AG04450 (cell line): ENCODE measurements at regions of chr7 and their contacts with region 1.

Region 1: GRCh38 chr7:154503962-154504550 is 451.9 kb downstream of the DPP6 start:
- DNase-seq: no peak
- H3K4me3 ChIP-seq: no peak overlapping the region
- H3K27ac ChIP-seq: no peak overlapping the region
- H3K27me3 ChIP-seq: no peaks in the 10 kb centered on the region
- CTCF ChIP-seq: peak; percentile 46; the same call in 1 of the 2 replicates

Region 2: GRCh38 chr7:152894273-152895170 is 1609.5 kb before region 1 on chr7:
- CTCF ChIA-PET with region 1: interaction called, 10 read pairs
- POLR2A ChIA-PET with region 1: no interaction called
- DNase-seq: no peak
- H3K4me3 ChIP-seq: no peak overlapping the region
- H3K27ac ChIP-seq: no peak overlapping the region
- H3K27me3 ChIP-seq: no peaks in the 10 kb centered on the region
- CTCF ChIP-seq: peak; percentile 54

Region 3: DNA sequence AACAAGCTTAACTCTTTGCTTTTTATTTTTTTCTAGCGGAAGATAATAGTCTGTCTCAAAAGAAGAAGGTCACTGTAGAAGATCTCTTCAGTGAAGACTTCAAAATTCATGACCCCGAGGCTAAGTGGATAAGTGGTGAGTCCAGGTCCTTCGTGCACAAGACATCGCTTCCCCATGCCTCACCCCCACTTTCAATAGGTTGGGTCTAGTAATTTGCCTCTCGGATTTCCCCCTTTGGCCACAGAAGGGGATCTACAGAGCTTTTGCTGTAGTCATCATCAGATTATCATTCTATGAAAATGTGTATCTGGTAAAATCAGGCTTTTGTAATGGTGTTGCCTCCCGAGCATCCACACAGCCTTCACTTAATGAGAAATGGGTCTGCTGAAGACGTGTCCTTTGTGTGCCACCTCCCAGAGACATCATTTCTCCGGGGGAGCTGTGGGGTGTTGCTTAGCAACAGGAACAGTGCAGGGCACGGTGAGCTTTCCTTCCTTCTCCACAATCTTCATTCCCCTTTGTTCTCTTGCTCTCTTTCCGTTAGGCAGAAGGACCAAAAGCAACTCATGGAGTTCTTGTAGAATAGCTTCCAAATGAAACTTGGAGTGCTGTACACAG is 29.0 kb before region 1 on chr7:
- CTCF ChIA-PET with region 1: no interaction called
- POLR2A ChIA-PET with region 1: no interaction called
- DNase-seq: no peak
- H3K4me3 ChIP-seq: no peak overlapping the region
- H3K27ac ChIP-seq: no peak overlapping the region
- H3K27me3 ChIP-seq: no peaks in the 10 kb centered on the region
- CTCF ChIP-seq: no peak